ENCODE measurements at regions of chr12 and their contacts with region 1.

Region 1: GRCh38 chr12:122635471-122635870 is 67.7 kb downstream of the HCAR2 start:
- DNase-seq: no peak
- ATAC-seq: no peak
- H3K4me3 ChIP-seq: no peak overlapping the region
- H3K27ac ChIP-seq: no peak overlapping the region
- H3K4me1 ChIP-seq: no peaks in the 10 kb centered on the region
- H3K27me3 ChIP-seq: no peaks in the 10 kb centered on the region
- CTCF ChIP-seq: no peak
- POLR2A ChIP-seq: no peak

Region 2: DNA sequence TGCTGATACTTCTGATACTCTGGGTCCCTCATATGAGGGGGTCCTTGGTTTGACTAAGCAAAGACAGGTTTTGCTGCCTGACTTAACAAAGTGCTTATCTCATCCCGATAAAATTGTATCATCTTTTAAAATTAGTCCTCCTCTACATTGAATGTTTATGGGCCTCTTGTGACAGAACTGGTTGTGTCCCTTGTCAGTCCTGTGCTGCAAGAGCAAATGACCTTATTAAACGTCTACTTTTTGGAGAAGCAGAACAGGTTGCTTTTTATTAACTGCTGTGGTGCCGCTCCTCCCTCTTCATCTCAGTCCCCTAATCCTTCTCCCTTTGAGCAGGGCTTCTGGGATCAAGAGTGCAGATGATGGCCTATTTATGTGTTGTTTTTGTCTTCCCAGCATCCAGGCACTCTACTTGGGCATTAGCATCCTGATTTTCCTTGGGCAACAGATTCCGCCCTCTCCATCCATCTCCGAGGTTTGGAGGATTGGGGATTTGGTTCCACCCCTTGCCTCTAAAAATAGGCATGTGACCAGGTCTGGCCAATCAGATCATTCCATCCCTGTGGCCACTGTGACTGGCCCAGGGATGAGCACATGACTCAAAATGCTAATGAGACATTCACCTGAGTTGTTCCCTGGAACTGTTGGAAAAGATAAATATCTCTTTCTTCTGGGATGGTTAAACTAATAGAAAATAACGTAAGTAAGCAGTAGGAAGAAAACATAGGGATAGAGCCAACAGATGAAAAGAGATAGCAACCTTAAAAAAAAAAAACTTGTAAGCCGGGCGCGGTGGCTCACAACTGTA is 114.3 kb after region 1 on chr12:
- intact Hi-C with region 1: loop called (anchors 10 kb)
- DNase-seq: no peak
- ATAC-seq: no peak
- H3K4me3 ChIP-seq: no peak overlapping the region
- H3K27ac ChIP-seq: no peak overlapping the region
- H3K4me1 ChIP-seq: peaks cover 11% of the 10 kb centered on the region
- H3K27me3 ChIP-seq: no peaks in the 10 kb centered on the region
- CTCF ChIP-seq: no peak
- POLR2A ChIP-seq: no peak

Region 3: DNA sequence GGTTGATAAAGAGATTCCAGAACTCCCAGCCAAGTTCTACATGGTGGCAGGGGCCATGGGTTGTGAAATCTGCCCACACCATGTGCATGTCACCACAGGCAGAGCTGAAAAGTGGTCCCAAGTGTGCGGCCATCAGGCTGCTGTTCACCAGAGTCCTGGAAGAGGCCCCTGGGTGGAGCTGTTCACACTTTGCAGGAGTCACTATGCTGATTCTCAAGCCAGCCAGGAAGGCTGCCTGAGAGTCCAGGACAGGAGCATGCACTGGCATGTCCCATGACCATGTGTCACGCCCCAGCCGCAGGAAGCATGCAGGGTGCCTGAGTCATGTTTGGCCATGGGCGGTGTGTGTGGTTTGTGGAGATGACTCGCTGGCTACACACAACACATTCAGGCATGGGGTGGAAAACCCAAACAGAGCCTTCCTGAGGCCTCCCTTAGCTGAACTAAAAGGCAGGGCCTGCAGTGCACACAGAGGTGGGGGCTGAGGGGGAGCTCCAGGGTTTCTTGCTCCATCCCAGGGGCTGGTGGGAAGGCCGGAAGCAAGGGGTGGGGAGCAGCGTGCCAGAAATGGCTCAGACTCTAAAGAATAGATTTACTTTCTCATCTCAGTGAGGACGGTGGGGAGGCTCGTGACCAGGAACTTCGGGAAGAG is 311.3 kb after region 1 on chr12:
- intact Hi-C with region 1: loop called (anchors 10 kb)
- DNase-seq: peak; percentile 51 to 86 (median 72)
- ATAC-seq: peak; percentile 53
- H3K4me3 ChIP-seq: no peak overlapping the region
- H3K27ac ChIP-seq: peak overlapping the region; percentile 28 to 69 (median 59)
- H3K4me1 ChIP-seq: peaks cover 22% of the 10 kb centered on the region
- H3K27me3 ChIP-seq: no peaks in the 10 kb centered on the region
- CTCF ChIP-seq: peak in 1 of 7 experiments; percentile 11
- POLR2A ChIP-seq: no peak